Natural killer cell (primary cell): ENCODE measurements at regions of chr4 and their contacts with region 1.

Region 1: DNA sequence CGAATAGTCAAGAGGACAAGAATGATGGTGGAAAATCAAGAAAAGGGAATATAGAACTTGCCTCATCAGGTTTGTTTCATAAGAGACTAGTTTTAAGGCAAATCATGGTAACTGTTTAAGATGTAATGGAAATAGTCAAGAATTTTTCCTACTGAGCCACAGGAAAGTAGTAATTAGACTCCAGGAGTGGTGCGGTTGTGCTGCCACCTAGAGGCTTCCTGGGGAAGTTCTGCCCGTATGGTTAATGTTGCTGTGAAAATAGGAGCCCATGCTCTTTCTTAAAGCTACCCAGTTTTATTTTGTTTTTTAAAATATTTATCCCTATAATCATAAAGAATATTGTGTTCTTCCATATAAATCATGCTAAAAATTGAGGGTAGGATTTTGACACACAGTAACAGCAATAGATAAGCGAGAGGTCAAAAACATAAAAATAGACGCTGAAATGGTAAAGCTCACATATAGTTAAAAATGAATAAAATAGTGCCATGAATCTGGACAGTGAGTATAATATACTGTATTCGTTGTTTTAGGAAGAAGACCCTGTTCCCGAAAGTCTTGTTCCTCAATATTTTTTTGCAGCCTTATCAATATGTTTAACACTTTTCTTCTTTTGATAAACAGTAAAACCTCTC is 87.0 kb downstream of the PHOX2B start:
- DNase-seq: peak in 1 of 2 donors; percentile 45
- ATAC-seq: no peak
- H3K4me3 ChIP-seq: no peak overlapping the region
- H3K4me3 Mint-ChIP-seq: no peak overlapping the region
- H3K27ac ChIP-seq: no peak overlapping the region
- H3K27ac Mint-ChIP-seq: no peak overlapping the region
- H3K4me1 ChIP-seq: no peaks in the 10 kb centered on the region
- H3K4me1 Mint-ChIP-seq: no peaks in the 10 kb centered on the region
- H3K27me3 ChIP-seq: no peaks in the 10 kb centered on the region
- H3K27me3 Mint-ChIP-seq: peaks cover 7 to 12% of the 10 kb centered on the region in 2 donors
- CTCF ChIP-seq: peak; percentile 75

Region 2: GRCh38 chr4:40924793-40925117 is 736.8 kb before region 1 on chr4:
- intact Hi-C with region 1: loop called (anchors 5 kb)
- DNase-seq: no peak
- ATAC-seq: no peak
- H3K4me3 ChIP-seq: no peak overlapping the region
- H3K4me3 Mint-ChIP-seq: no peak overlapping the region
- H3K27ac ChIP-seq: no peak overlapping the region
- H3K27ac Mint-ChIP-seq: no peak overlapping the region
- H3K4me1 ChIP-seq: no peaks in the 10 kb centered on the region
- H3K4me1 Mint-ChIP-seq: peaks cover 4 to 5% of the 10 kb centered on the region in 2 donors
- H3K27me3 ChIP-seq: no peaks in the 10 kb centered on the region
- H3K27me3 Mint-ChIP-seq: peaks cover 3 to 26% of the 10 kb centered on the region in 2 donors
- CTCF ChIP-seq: peak; percentile 11

Region 3: GRCh38 chr4:41281038-41281634 is 380.4 kb before region 1 on chr4:
- intact Hi-C with region 1: loop called (anchors 10 kb)
- DNase-seq: peak in 1 of 2 donors; percentile 71
- ATAC-seq: peak; percentile 49 to 87 (median 72)
- H3K4me3 ChIP-seq: no peak overlapping the region
- H3K4me3 Mint-ChIP-seq: no peak overlapping the region
- H3K27ac ChIP-seq: no peak overlapping the region
- H3K27ac Mint-ChIP-seq: no peak overlapping the region
- H3K4me1 ChIP-seq: no peaks in the 10 kb centered on the region
- H3K4me1 Mint-ChIP-seq: no peaks in the 10 kb centered on the region
- H3K27me3 ChIP-seq: no peaks in the 10 kb centered on the region
- H3K27me3 Mint-ChIP-seq: peaks cover 4 to 5% of the 10 kb centered on the region in 2 donors
- CTCF ChIP-seq: peak; percentile 71